ENCODE measurements at regions of chr14 and their contacts with region 1.

Region 1: DNA sequence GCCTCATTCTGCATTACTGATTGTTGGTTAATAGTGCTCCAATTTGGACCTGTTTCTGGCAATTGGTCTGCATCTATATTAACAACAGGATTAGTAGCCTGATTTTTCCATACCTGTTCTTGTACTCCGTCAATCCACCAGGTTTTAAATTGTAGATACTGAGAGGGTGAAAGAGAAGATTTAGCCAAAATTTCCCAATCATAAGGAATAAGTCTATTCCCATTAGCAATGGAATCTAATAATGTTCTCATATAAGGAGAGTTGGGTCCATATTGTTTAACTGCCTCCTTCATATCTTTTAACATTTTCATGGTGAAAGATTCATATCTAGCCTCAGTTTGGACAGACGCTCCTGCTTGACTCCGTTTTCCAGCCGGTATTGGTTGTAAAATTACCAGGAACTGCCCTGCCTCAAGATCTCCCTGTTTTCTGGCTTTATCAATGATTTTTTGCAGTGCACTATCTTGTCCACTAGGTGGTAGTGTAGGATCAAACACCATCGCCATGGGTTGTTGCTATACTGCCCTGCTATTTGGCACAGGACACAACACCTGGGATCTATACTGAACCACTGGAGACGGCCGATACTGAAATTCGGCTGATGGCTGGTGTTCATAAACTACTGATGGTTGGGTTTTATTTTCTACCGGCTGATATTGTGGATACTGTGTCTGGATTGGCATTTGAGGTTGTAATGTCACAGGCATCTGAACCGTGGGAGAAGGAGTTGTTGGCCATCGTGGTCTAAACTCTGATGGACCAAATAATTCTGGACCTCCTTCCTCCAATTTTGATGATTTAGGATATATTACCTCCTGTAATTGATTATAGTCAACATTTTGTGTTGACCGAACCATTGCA is 25.2 kb downstream of the DHRS4L2 start:
- DNase-seq: peak in 8 of 9 experiments; percentile 14 to 84 (median 50)
- ATAC-seq: peak; percentile 99
- H3K4me3 ChIP-seq: no peak overlapping the region
- H3K4me3 Mint-ChIP-seq: no peak overlapping the region
- H3K27ac ChIP-seq: no peak overlapping the region
- H3K27ac Mint-ChIP-seq: no peak overlapping the region
- H3K4me1 ChIP-seq: peaks cover 7% of the 10 kb centered on the region
- H3K4me1 Mint-ChIP-seq: peaks cover 25% of the 10 kb centered on the region
- H3K27me3 ChIP-seq: no peaks in the 10 kb centered on the region
- H3K27me3 Mint-ChIP-seq: no peaks in the 10 kb centered on the region
- CTCF ChIP-seq: peak; percentile 93

Region 2: DNA sequence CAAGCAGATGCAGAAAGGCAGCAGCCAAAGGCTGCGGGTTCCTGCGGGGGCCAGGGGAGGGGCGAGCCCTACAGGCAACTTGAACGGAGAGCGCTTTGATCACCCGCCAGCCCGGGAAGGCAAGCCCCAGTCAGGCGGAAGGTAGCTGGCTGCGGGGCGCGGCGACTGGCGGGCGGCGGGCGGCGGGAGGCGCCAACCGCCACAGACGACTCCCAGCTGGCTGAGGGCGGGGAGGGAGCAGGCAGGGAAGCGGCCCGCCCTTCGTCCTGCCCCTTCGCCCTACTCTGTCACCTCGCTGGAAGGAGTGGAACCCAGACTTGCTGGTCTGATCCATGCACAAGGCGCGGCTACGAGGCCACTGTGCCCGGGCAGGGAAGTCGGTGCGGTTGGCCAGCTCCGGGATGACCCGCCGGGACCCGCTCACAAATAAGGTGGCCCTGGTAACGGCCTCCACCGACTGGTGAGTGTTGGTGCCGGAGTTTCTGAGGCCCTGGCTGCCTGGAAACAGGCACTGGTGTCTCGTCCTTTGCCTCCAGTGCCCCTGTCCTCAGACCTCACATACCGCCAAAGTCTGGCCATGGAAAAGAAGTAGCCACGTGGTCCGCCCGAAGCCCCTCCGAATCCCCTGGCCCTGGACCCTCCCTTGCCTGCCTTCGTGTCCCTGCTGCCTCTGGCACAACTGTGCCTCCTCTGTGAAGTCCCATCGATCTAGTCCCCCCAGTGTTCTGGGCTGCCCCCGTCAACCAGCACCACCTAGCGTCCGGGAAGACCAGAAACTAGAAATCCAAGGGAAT is 22.5 kb after region 1 on chr14:
- CTCF ChIA-PET with region 1: interaction called, 4 read pairs
- POLR2A ChIA-PET with region 1: no interaction called
- intact Hi-C with region 1: loop called (anchors 1 kb)
- DNase-seq: peak; percentile 29 to 79 (median 69)
- ATAC-seq: peak; percentile 79
- H3K4me3 ChIP-seq: peak overlapping the region; percentile 69 to 87
- H3K4me3 Mint-ChIP-seq: peak overlapping the region; percentile 89
- H3K27ac ChIP-seq: peak overlapping the region; percentile 40 to 66
- H3K27ac Mint-ChIP-seq: peak overlapping the region; percentile 83
- H3K4me1 ChIP-seq: no peaks in the 10 kb centered on the region
- H3K4me1 Mint-ChIP-seq: peaks cover 9% of the 10 kb centered on the region
- H3K27me3 ChIP-seq: no peaks in the 10 kb centered on the region
- H3K27me3 Mint-ChIP-seq: no peaks in the 10 kb centered on the region
- CTCF ChIP-seq: peak; percentile 64

Region 3: DNA sequence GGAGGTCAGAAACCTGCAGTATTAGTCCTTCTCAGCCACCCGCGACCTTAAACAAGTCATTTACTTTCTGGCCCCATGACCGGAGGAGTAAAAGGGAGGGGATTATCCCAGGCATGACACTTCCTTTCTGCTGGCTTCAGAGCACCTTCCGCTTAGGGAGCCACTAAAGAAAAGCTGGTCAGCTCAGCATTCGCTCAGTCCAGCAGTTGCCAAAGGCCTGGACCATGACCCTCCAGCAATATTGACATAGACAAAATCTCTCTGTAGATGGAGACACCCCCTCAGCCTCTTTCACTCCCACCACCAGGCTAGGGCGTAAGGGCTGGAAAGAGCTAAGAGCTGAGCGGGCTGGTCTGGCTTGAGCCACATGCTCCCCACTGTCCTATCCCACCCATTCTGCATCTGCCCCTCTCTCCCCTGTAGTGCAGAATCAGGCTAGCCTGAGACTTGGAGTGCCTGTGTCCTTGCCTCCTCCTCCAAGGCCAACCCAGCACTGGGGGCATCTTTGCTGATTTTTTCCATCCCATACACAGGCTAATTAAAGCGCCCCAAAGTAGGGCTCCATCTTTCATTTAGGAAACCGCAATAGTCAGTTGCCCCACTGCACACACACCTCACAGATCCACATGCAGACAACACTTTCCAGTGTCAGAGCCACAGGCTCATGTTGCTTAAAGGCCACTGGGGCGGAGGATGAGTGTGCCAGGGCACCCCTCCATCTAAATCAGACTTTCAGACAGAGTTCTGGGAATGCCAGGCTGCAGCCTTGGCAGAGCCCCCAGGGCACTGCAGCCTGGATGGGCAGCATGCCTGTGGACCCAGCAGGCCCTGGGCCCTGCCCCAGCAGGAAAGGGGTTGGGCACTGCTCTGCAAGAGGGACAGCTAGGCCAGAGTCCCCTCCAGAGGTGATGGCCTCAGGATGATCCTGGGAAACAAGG is 53.5 kb after region 1 on chr14:
- CTCF ChIA-PET with region 1: no interaction called
- POLR2A ChIA-PET with region 1: no interaction called
- intact Hi-C with region 1: no loop called
- DNase-seq: no peak
- ATAC-seq: no peak
- H3K4me3 ChIP-seq: no peak overlapping the region
- H3K4me3 Mint-ChIP-seq: no peak overlapping the region
- H3K27ac ChIP-seq: no peak overlapping the region
- H3K27ac Mint-ChIP-seq: no peak overlapping the region
- H3K4me1 ChIP-seq: no peaks in the 10 kb centered on the region
- H3K4me1 Mint-ChIP-seq: no peaks in the 10 kb centered on the region
- H3K27me3 ChIP-seq: no peaks in the 10 kb centered on the region
- H3K27me3 Mint-ChIP-seq: peaks cover 8% of the 10 kb centered on the region
- CTCF ChIP-seq: no peak

Region 4: DNA sequence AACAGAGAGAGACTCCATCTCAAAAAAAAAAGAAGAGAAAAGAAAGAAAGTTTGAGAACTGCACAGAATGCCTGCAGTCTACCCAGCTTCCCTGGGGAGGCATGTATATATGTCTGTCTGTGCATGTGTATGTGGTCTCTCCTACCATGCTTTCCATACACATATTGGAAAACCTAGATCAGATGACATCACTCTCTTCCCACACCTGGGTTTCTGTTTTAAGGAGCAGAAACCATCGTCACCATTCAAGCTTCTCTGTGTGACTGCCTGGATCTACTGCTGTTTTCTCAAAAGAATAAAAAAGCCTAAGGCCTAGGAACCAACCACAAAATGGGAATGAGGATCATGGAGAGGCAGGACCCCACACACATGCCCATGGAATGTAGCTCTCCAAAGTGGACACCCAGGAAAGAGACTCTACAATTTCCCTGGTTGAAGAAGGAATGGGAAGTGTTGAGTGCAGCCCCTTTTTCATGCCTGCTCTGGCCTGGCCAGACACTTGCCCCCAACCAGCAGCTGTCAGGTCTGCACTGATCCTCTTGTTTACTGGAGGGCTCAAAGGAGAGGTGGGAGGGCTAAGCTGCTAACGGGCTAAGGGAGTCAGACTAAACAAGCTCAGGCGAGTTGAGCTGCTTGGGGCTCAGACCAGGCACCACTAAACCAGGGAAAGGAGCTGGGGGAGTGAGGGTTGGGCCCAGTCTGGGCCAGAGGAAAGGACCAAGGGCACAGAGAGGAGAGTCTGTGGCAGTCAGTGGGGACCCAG is 72.5 kb after region 1 on chr14:
- CTCF ChIA-PET with region 1: interaction called, 9 read pairs
- POLR2A ChIA-PET with region 1: no interaction called
- intact Hi-C with region 1: loop called (anchors 1 kb)
- DNase-seq: no peak
- ATAC-seq: no peak
- H3K4me3 ChIP-seq: no peak overlapping the region
- H3K4me3 Mint-ChIP-seq: no peak overlapping the region
- H3K27ac ChIP-seq: no peak overlapping the region
- H3K27ac Mint-ChIP-seq: no peak overlapping the region
- H3K4me1 ChIP-seq: peaks cover 10% of the 10 kb centered on the region
- H3K4me1 Mint-ChIP-seq: peaks cover 17% of the 10 kb centered on the region
- H3K27me3 ChIP-seq: no peaks in the 10 kb centered on the region
- H3K27me3 Mint-ChIP-seq: no peaks in the 10 kb centered on the region
- CTCF ChIP-seq: no peak

Region 5: GRCh38 chr14:24119691-24120090 is 105.8 kb after region 1 on chr14:
- CTCF ChIA-PET with region 1: no interaction called
- POLR2A ChIA-PET with region 1: no interaction called
- intact Hi-C with region 1: no loop called
- DNase-seq: no peak
- ATAC-seq: no peak
- H3K4me3 ChIP-seq: no peak overlapping the region
- H3K4me3 Mint-ChIP-seq: no peak overlapping the region
- H3K27ac ChIP-seq: no peak overlapping the region
- H3K27ac Mint-ChIP-seq: no peak overlapping the region
- H3K4me1 ChIP-seq: peaks cover 14% of the 10 kb centered on the region
- H3K4me1 Mint-ChIP-seq: peaks cover 30% of the 10 kb centered on the region
- H3K27me3 ChIP-seq: no peaks in the 10 kb centered on the region
- H3K27me3 Mint-ChIP-seq: no peaks in the 10 kb centered on the region
- CTCF ChIP-seq: no peak

Region 6: DNA sequence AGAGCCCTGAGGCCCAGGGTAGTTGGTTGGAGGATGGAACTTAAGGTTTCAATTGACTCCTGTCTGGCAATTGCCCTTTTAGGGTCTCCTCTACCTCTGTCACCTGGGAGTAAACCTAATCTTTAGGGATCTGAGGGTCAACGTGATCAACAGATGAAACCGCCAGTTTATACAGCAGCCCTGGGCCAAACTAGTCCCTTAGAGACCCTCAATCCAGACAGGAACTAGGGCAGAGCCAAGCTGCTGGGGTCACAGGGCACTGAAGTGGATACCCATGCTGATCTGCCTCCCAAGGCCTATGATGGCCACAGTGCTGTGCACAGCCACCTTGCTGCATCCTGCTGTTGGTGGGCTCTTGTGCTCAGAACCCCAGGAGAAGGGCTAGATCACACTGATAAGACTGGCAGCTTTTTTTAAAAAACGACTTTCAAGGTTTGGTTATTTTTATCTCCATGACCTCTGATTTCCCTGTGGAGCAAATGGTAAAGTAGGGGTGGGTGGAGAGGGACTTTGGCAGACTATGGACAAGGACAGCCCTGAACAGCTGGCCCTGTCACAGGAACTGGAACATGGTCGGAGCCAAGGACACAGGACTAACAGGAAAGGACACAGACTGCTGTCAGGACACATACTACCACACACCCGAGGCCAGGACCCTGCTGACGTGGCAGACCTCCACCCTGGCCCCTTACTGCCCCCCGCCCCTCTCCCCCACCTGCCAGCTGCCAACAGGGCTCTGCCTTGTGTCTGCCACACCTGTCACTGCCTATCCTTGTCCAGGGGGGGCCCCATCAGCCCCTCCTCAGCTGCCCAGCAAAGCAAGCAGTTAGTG is 117.0 kb after region 1 on chr14:
- CTCF ChIA-PET with region 1: no interaction called
- POLR2A ChIA-PET with region 1: no interaction called
- intact Hi-C with region 1: no loop called
- DNase-seq: no peak
- ATAC-seq: no peak
- H3K4me3 ChIP-seq: no peak overlapping the region
- H3K4me3 Mint-ChIP-seq: no peak overlapping the region
- H3K27ac ChIP-seq: no peak overlapping the region
- H3K27ac Mint-ChIP-seq: no peak overlapping the region
- H3K4me1 ChIP-seq: peaks cover 24% of the 10 kb centered on the region
- H3K4me1 Mint-ChIP-seq: peaks cover 26% of the 10 kb centered on the region
- H3K27me3 ChIP-seq: no peaks in the 10 kb centered on the region
- H3K27me3 Mint-ChIP-seq: no peaks in the 10 kb centered on the region
- CTCF ChIP-seq: no peak

Region 7: DNA sequence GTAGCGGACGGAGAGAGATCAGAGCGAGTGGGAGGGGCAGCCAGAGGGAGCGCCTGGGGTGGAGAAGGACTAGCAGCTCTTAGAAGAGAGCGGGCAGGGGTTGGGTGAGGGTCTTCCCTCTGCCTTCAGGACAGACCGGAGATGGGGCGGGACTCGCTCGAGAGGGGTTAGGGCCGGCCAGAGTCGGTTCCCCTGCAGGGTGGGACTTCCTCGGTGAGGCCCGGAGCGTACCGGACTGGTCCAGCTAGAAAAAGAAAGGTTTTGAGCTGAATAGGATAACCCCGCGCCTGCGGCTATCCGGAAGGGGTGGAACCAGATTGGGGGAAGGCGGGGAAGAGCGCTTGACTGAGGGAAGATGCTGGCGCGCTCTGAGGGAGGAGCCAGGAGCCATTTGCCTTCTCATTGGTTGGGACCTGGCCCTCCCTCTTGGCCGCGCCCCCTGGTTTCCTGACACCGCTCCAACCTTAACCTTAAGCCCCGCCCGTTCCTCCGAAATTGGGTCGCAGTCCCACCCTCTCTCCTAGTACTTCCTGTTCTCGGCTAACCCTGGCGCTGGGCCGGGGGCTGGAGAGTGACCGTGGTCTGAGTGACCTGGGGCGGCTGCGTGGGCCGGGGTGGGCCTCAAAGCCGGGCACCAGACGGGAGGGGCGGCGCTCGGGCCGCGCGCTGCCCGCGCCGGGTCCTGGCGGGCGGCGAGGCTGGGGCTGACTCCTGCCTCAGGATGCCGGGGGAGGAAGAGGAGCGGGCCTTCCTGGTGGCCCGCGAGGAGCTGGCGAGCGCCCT is 133.3 kb after region 1 on chr14 and contains the start of gene RNF31:
- CTCF ChIA-PET with region 1: no interaction called
- POLR2A ChIA-PET with region 1: no interaction called
- intact Hi-C with region 1: no loop called
- DNase-seq: peak; percentile 93 to 99 (median 97)
- ATAC-seq: peak; percentile 89
- H3K4me3 ChIP-seq: peak within 1 kb of the TSS; percentile 96 to 99
- H3K4me3 Mint-ChIP-seq: peak within 1 kb of the TSS; percentile 95
- H3K27ac ChIP-seq: peak within 1 kb of the TSS; percentile 79 to 91
- H3K27ac Mint-ChIP-seq: peak within 1 kb of the TSS; percentile 93
- H3K4me1 ChIP-seq: peaks cover 34% of the 10 kb centered on the region
- H3K4me1 Mint-ChIP-seq: peaks cover 53% of the 10 kb centered on the region
- H3K27me3 ChIP-seq: no peaks in the 10 kb centered on the region
- H3K27me3 Mint-ChIP-seq: no peaks in the 10 kb centered on the region
- CTCF ChIP-seq: no peak
- total RNA-seq, gene RNF31: 45.4 to 51.7 TPM

Region 8: GRCh38 chr14:24299255-24300195 is 285.6 kb after region 1 on chr14 and contains the starts of genes DHRS1 and NOP9:
- CTCF ChIA-PET with region 1: no interaction called
- POLR2A ChIA-PET with region 1: no interaction called
- intact Hi-C with region 1: loop called (anchors 1 to 2 kb)
- DNase-seq: peak; percentile 82 to 98 (median 92)
- ATAC-seq: peak; percentile 78
- H3K4me3 ChIP-seq: peak within 1 kb of the TSS; percentile 80 to 83
- H3K4me3 Mint-ChIP-seq: peak within 1 kb of the TSS; percentile 94
- H3K27ac ChIP-seq: peak within 1 kb of the TSS; percentile 80 to 85
- H3K27ac Mint-ChIP-seq: peak within 1 kb of the TSS; percentile 96
- H3K4me1 ChIP-seq: peaks cover 28% of the 10 kb centered on the region
- H3K4me1 Mint-ChIP-seq: peaks cover 51% of the 10 kb centered on the region
- H3K27me3 ChIP-seq: no peaks in the 10 kb centered on the region
- H3K27me3 Mint-ChIP-seq: no peaks in the 10 kb centered on the region
- CTCF ChIP-seq: no peak
- total RNA-seq, gene DHRS1: 24.3 to 28.5 TPM
- total RNA-seq, gene NOP9: 35.6 to 35.8 TPM